GM12878 (cell line): ENCODE measurements at regions of chr1 and their contacts with region 1.

Region 1: GRCh38 chr1:110630839-110631663 is 24.9 kb upstream of the KCNA2 start:
- DNase-seq: peak; percentile 84
- ATAC-seq: peak; percentile 85
- H3K4me3 ChIP-seq: peak overlapping the region; percentile 10; the same call in 1 of the 2 replicates
- H3K27ac ChIP-seq: peak overlapping the region; percentile 66
- H3K4me1 ChIP-seq: peaks cover 67% of the 10 kb centered on the region
- H3K27me3 ChIP-seq: no peaks in the 10 kb centered on the region
- CTCF ChIP-seq: peak; percentile 84 to 89 (median 86)
- EP300 ChIP-seq: no peak
- POLR2A ChIP-seq: no peak
- RAD21 ChIP-seq: peak; percentile 94

Region 2: GRCh38 chr1:110243574-110243973 is 387.5 kb before region 1 on chr1:
- CTCF ChIA-PET with region 1: no interaction called
- POLR2A ChIA-PET with region 1: no interaction called
- RAD21 ChIA-PET with region 1: no interaction called
- SMC1A ChIA-PET with region 1: no interaction called
- in situ Hi-C with region 1: no loop called
- intact Hi-C with region 1: no loop called
- DNase-seq: no peak
- ATAC-seq: peak; percentile 90
- H3K4me3 ChIP-seq: no peak overlapping the region
- H3K27ac ChIP-seq: no peak overlapping the region
- H3K4me1 ChIP-seq: peaks cover 15% of the 10 kb centered on the region; the same call in 1 of the 2 replicates
- H3K27me3 ChIP-seq: no peaks in the 10 kb centered on the region; a peak in 1 of 4 replicates
- CTCF ChIP-seq: no peak
- EP300 ChIP-seq: peak in 1 of 2 experiments; percentile 38; a peak in 1 of 4 replicates
- POLR2A ChIP-seq: no peak
- RAD21 ChIP-seq: no peak

Region 3: GRCh38 chr1:110645821-110646735 is 15.0 kb after region 1 on chr1:
- CTCF ChIA-PET with region 1: interaction called, 59 read pairs
- POLR2A ChIA-PET with region 1: interaction called, 23 read pairs
- RAD21 ChIA-PET with region 1: interaction called, 82 read pairs
- SMC1A ChIA-PET with region 1: interaction called, 144 read pairs
- in situ Hi-C with region 1: no loop called
- intact Hi-C with region 1: no loop called
- DNase-seq: no peak
- ATAC-seq: no peak
- H3K4me3 ChIP-seq: no peak overlapping the region
- H3K27ac ChIP-seq: no peak overlapping the region
- H3K4me1 ChIP-seq: peaks cover 23% of the 10 kb centered on the region
- H3K27me3 ChIP-seq: no peaks in the 10 kb centered on the region
- CTCF ChIP-seq: no peak
- EP300 ChIP-seq: no peak
- POLR2A ChIP-seq: no peak
- RAD21 ChIP-seq: no peak

Region 4: GRCh38 chr1:110672001-110672752 is 41.1 kb after region 1 on chr1:
- CTCF ChIA-PET with region 1: interaction called, 8 read pairs
- POLR2A ChIA-PET with region 1: no interaction called
- RAD21 ChIA-PET with region 1: interaction called, 10 read pairs
- SMC1A ChIA-PET with region 1: no interaction called
- in situ Hi-C with region 1: no loop called
- intact Hi-C with region 1: loop called (anchors 2 kb)
- DNase-seq: no peak
- ATAC-seq: peak; percentile 12
- H3K4me3 ChIP-seq: peak overlapping the region; percentile 64
- H3K27ac ChIP-seq: peak overlapping the region; percentile 40; the same call in 1 of the 2 replicates
- H3K4me1 ChIP-seq: peaks cover 29% of the 10 kb centered on the region
- H3K27me3 ChIP-seq: peaks cover 0 to 4% of the 10 kb centered on the region in 2 experiments; a peak in 2 of 4 replicates
- CTCF ChIP-seq: no peak
- EP300 ChIP-seq: no peak
- POLR2A ChIP-seq: no peak
- RAD21 ChIP-seq: no peak

Region 5: DNA sequence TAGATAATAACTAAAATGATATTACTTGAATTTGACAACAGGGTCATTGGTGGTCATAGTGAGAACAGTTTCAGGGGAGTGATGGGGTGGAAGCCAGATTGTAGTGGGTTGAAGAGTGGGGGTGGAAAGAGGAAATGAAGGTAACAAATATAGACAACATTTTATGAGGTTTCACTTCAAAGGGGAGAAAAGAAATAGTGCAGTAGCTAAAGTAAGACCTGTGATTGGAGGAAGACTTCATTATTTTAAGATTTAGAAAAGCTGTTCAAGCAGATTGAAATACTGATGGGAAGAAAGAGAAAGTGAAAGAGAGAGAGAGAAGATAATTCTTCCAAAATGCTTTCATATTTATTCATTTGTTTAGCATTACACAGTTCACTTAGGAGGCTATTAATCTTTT is 95.7 kb after region 1 on chr1:
- CTCF ChIA-PET with region 1: interaction called, 4 read pairs
- POLR2A ChIA-PET with region 1: no interaction called
- RAD21 ChIA-PET with region 1: interaction called, 13 read pairs
- SMC1A ChIA-PET with region 1: interaction called, 6 read pairs
- in situ Hi-C with region 1: no loop called
- intact Hi-C with region 1: loop called (anchors 2 kb)
- DNase-seq: peak; percentile 57
- ATAC-seq: peak; percentile 96
- H3K4me3 ChIP-seq: peak overlapping the region; percentile 66; the same call in 1 of the 2 replicates
- H3K27ac ChIP-seq: peak overlapping the region; percentile 60
- H3K4me1 ChIP-seq: peaks cover 24% of the 10 kb centered on the region
- H3K27me3 ChIP-seq: no peaks in the 10 kb centered on the region
- CTCF ChIP-seq: no peak
- EP300 ChIP-seq: no peak
- POLR2A ChIP-seq: no peak
- RAD21 ChIP-seq: no peak

Region 6: DNA sequence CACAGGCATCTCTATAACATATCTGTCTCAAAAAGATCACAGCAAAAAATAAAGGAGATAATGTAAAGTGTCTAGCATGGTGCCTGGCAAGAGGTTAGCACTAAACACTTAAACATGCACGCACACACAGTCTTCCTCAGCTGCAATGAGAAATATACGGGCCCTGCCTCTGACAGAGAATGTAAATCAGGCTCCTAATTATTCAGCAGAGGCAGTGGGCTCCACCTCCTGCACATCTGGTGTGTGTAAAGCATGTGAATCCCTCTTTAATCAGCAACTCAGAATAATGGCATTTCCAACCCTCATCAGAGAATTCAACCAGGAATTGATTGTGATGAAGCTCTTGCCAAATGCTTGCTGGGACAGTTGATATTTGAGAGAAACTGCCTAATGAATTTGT is 129.3 kb after region 1 on chr1:
- CTCF ChIA-PET with region 1: interaction called, 162 read pairs
- POLR2A ChIA-PET with region 1: interaction called, 5 read pairs
- RAD21 ChIA-PET with region 1: interaction called, 66 read pairs
- SMC1A ChIA-PET with region 1: interaction called, 98 read pairs
- in situ Hi-C with region 1: no loop called
- intact Hi-C with region 1: no loop called
- DNase-seq: no peak
- ATAC-seq: no peak
- H3K4me3 ChIP-seq: no peak overlapping the region
- H3K27ac ChIP-seq: no peak overlapping the region
- H3K4me1 ChIP-seq: peaks cover 2% of the 10 kb centered on the region; the same call in 1 of the 2 replicates
- H3K27me3 ChIP-seq: no peaks in the 10 kb centered on the region
- CTCF ChIP-seq: no peak
- EP300 ChIP-seq: no peak
- POLR2A ChIP-seq: no peak
- RAD21 ChIP-seq: no peak

Region 7: GRCh38 chr1:110787328-110788071 is 156.4 kb after region 1 on chr1:
- CTCF ChIA-PET with region 1: interaction called, 16 read pairs
- POLR2A ChIA-PET with region 1: no interaction called
- RAD21 ChIA-PET with region 1: interaction called, 4 read pairs
- SMC1A ChIA-PET with region 1: interaction called, 19 read pairs
- in situ Hi-C with region 1: no loop called
- intact Hi-C with region 1: loop called (anchors 5 kb)
- DNase-seq: peak; percentile 76
- ATAC-seq: peak; percentile 83
- H3K4me3 ChIP-seq: no peak overlapping the region
- H3K27ac ChIP-seq: peak overlapping the region; percentile 98
- H3K4me1 ChIP-seq: peaks cover 29% of the 10 kb centered on the region
- H3K27me3 ChIP-seq: no peaks in the 10 kb centered on the region
- CTCF ChIP-seq: no peak
- EP300 ChIP-seq: no peak
- POLR2A ChIP-seq: no peak
- RAD21 ChIP-seq: no peak